Activated T-helper 2 cell treated with anti-CD3 and anti-CD28 coated beads, Interferon-gamma antibody, Interleukin-2, Interleukin-4, amounts not matched to agents 10 μg/mL and 5 μg/mL and 100 μg/mL, durations not matched to agents 14 hours and 24 hours and 36 hours (primary cell): ENCODE measurements at regions of chr6 and their contacts with region 1.

Region 1: DNA sequence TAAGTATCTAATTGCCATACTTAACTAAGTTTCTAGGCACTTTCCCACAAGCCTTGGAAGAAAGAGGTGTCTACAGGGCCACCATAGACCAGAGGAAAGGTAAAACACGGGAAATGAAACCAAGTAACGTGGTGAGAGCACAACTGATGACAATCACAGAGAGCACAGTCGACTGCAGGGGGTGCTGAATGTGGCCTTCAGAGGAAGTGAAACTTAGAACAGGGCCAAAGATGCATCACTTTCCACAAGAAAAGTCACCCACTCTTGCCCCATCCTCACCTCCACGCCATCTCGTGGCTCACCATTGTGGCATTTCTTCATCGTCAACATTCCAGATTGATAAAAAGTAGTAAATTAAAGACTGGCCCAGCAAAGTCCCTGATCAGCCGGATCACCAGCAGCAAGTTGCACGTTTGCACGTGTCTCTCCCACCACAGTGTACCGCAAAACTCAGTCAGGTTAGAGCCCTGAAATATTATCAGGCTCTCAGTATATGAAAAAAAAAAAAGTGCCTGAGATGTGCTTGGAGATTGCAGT is 31.4 kb downstream of the HIVEP2 start:
- DNase-seq: peak; percentile 75
- H3K4me3 Mint-ChIP-seq: peak overlapping the region; percentile 48
- H3K27ac Mint-ChIP-seq: peak overlapping the region; percentile 87
- H3K4me1 Mint-ChIP-seq: peaks cover 67% of the 10 kb centered on the region
- H3K27me3 Mint-ChIP-seq: no peaks in the 10 kb centered on the region

Region 2: GRCh38 chr6:142819603-142820337 is 93.8 kb before region 1 on chr6:
- intact Hi-C with region 1: loop called (anchors 1 kb)
- DNase-seq: peak; percentile 55
- H3K4me3 Mint-ChIP-seq: peak overlapping the region; percentile 76
- H3K27ac Mint-ChIP-seq: peak overlapping the region; percentile 91
- H3K4me1 Mint-ChIP-seq: peaks cover 57% of the 10 kb centered on the region
- H3K27me3 Mint-ChIP-seq: no peaks in the 10 kb centered on the region

Region 3: DNA sequence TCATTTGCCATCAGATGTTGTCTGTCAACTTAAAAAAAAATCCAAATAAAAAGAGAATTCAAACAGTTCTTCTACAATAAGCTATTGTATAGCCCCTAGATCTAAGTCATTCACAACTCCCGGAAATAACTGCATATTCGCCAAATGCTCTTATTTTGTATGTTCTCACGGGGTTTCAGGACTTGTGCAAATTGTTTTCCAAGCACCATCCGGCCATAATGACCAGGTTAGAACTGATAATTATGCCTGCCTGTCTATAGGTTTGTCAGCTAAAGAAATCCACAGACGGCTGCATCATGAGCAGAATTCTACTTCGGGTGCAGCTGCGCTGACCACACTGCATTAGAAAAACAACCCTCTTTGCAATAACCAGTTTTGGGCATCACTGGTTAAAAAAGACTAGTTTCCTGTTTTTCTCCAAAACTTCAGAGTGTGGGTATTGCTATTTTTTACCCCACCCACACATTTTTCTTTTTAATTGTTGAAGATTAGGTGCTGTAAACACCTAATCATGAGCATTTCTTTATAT is 56.3 kb before region 1 on chr6:
- intact Hi-C with region 1: loop called (anchors 1 kb)
- DNase-seq: no peak
- H3K4me3 Mint-ChIP-seq: peak overlapping the region; percentile 75
- H3K27ac Mint-ChIP-seq: peak overlapping the region; percentile 93
- H3K4me1 Mint-ChIP-seq: peaks cover 79% of the 10 kb centered on the region
- H3K27me3 Mint-ChIP-seq: no peaks in the 10 kb centered on the region

Region 4: GRCh38 chr6:142885182-142885867 is 28.3 kb before region 1 on chr6:
- intact Hi-C with region 1: loop called (anchors 1 kb)
- DNase-seq: peak; percentile 26
- H3K4me3 Mint-ChIP-seq: peak overlapping the region; percentile 92
- H3K27ac Mint-ChIP-seq: peak overlapping the region; percentile 99
- H3K4me1 Mint-ChIP-seq: peaks cover 65% of the 10 kb centered on the region
- H3K27me3 Mint-ChIP-seq: no peaks in the 10 kb centered on the region

Region 5: GRCh38 chr6:142896732-142897131 is 16.8 kb before region 1 on chr6:
- intact Hi-C with region 1: no loop called
- DNase-seq: no peak
- H3K4me3 Mint-ChIP-seq: no peak overlapping the region
- H3K27ac Mint-ChIP-seq: no peak overlapping the region
- H3K4me1 Mint-ChIP-seq: peaks cover 20% of the 10 kb centered on the region
- H3K27me3 Mint-ChIP-seq: no peaks in the 10 kb centered on the region

Region 6: GRCh38 chr6:142926494-142927270 is 13.1 kb after region 1 on chr6:
- intact Hi-C with region 1: loop called (anchors 1 kb)
- DNase-seq: peak; percentile 69
- H3K4me3 Mint-ChIP-seq: peak overlapping the region; percentile 91
- H3K27ac Mint-ChIP-seq: peak overlapping the region; percentile 90
- H3K4me1 Mint-ChIP-seq: peaks cover 43% of the 10 kb centered on the region
- H3K27me3 Mint-ChIP-seq: no peaks in the 10 kb centered on the region

Region 7: DNA sequence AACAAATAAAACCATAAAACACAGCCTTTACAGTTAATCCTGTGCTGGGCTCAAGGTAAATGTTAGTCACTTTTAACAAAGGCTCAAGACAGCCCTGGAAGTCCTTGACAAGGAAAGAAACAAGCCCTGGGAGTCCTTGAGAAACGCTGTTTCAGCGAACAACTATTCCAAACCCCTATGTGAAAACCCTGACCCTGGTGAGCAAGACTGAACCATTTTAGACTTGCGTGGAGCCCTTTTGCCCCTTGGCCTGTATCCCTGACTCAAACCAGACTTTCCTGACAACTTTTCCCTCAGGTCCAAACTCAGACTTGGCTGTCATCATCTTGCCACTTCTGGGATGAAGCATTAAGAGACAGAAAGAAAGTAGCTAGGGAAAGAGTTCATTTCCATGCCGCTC is 327.5 kb after region 1 on chr6:
- intact Hi-C with region 1: no loop called
- DNase-seq: no peak
- H3K4me3 Mint-ChIP-seq: no peak overlapping the region
- H3K27ac Mint-ChIP-seq: no peak overlapping the region
- H3K4me1 Mint-ChIP-seq: peaks cover under 1% of the 10 kb centered on the region
- H3K27me3 Mint-ChIP-seq: no peaks in the 10 kb centered on the region